ENCODE measurements at regions of chr1 and their contacts with region 1.

Region 1: GRCh38 chr1:207321079-207321789 is at the start of gene CD55:
- DNase-seq: peak; percentile 99
- H3K4me3 Mint-ChIP-seq: peak within 1 kb of the TSS; percentile 67
- H3K27ac Mint-ChIP-seq: peak within 1 kb of the TSS; percentile 82
- H3K4me1 Mint-ChIP-seq: peaks cover 37% of the 10 kb centered on the region
- H3K27me3 Mint-ChIP-seq: no peaks in the 10 kb centered on the region
- CTCF ChIP-seq: no peak
- total RNA-seq, gene CD55: 106 and 126 TPM in 2 replicates

Region 2: DNA sequence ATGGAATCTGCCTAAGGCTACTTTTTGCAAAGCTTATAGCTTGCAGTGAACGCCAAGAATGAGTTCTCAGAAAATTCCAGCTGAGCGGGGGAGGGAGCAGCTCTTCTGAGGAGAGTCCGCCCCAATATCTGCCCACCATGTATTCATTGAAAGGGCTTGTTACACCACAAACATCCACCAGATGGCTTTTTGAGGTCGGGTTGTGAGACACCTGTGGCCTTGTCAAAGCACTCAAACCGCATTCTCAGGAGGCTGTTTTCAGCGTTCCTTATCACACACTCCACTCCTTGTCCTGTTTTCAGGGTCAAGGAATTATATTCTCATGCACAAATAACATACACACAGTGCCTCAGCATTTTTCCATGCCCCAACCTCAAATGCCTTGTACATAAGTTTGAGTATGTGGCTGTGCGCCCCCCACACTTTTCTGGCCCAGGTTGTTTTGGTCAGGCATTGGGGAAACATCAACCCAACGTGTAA is 236.5 kb before region 1 on chr1:
- CTCF ChIA-PET with region 1: interaction called, 4 read pairs
- intact Hi-C with region 1: loop called (anchors 2 kb)
- DNase-seq: peak; percentile 76
- H3K4me3 Mint-ChIP-seq: no peak overlapping the region
- H3K27ac Mint-ChIP-seq: no peak overlapping the region
- H3K4me1 Mint-ChIP-seq: peaks cover 38% of the 10 kb centered on the region
- H3K27me3 Mint-ChIP-seq: no peaks in the 10 kb centered on the region
- CTCF ChIP-seq: peak; percentile 79

Region 3: GRCh38 chr1:207205614-207206061 is 115.6 kb before region 1 on chr1:
- CTCF ChIA-PET with region 1: interaction called, 4 read pairs
- intact Hi-C with region 1: loop called (anchors 2 kb)
- DNase-seq: no peak
- H3K4me3 Mint-ChIP-seq: peak overlapping the region; percentile 36
- H3K27ac Mint-ChIP-seq: peak overlapping the region; percentile 87
- H3K4me1 Mint-ChIP-seq: peaks cover 17% of the 10 kb centered on the region
- H3K27me3 Mint-ChIP-seq: no peaks in the 10 kb centered on the region
- CTCF ChIP-seq: no peak

Region 4: GRCh38 chr1:207259391-207259790 is 61.8 kb before region 1 on chr1:
- CTCF ChIA-PET with region 1: no interaction called
- intact Hi-C with region 1: loop called (anchors 2 kb)
- DNase-seq: peak; percentile 33
- H3K4me3 Mint-ChIP-seq: no peak overlapping the region
- H3K27ac Mint-ChIP-seq: no peak overlapping the region
- H3K4me1 Mint-ChIP-seq: no peaks in the 10 kb centered on the region
- H3K27me3 Mint-ChIP-seq: no peaks in the 10 kb centered on the region
- CTCF ChIP-seq: peak; percentile 49

Region 5: DNA sequence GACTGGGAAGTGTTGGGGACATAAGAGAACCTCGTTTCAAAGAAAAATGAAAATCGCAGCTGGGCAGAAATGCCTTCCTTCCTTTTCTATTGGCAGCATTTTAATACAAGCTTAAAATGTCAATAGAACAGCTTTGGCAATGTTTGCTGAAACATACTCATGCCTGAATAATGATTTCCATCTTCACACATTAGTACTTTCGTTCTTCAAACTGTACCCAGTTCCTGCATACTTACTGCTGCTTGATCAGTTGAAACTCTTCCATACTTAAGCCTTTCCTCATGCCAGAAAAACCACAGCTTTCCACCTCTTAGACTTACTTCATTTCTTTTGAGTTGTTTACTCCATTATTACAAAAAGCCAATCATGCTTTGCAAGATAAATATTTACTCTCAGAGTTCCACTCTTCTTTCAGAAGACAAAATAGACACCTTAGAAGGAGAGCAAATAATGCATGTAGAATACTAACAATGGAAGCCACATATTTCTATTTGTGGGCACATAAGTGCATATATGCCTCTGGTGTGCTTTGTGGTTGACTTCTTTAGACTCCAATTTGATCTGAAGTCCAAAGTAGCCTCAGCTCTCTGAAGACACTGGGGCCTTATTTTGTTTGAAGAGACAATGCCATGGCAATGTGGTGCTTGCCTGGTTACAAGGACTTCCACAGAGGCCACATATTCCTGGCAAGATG is 22.4 kb before region 1 on chr1:
- CTCF ChIA-PET with region 1: interaction called, 5 read pairs
- intact Hi-C with region 1: loop called (anchors 2 kb)
- DNase-seq: no peak
- H3K4me3 Mint-ChIP-seq: no peak overlapping the region
- H3K27ac Mint-ChIP-seq: peak overlapping the region; percentile 46
- H3K4me1 Mint-ChIP-seq: peaks cover 45% of the 10 kb centered on the region
- H3K27me3 Mint-ChIP-seq: no peaks in the 10 kb centered on the region
- CTCF ChIP-seq: no peak

Region 6: GRCh38 chr1:207393610-207394009 is 72.4 kb after region 1 on chr1:
- CTCF ChIA-PET with region 1: interaction called, 5 read pairs
- intact Hi-C with region 1: loop called (anchors 5 kb)
- DNase-seq: peak; percentile 83
- H3K4me3 Mint-ChIP-seq: peak overlapping the region; percentile 58
- H3K27ac Mint-ChIP-seq: peak overlapping the region; percentile 85
- H3K4me1 Mint-ChIP-seq: peaks cover 60% of the 10 kb centered on the region
- H3K27me3 Mint-ChIP-seq: no peaks in the 10 kb centered on the region
- CTCF ChIP-seq: no peak